ENCODE measurements at regions of chr15 and their contacts with region 1.

Region 1: DNA sequence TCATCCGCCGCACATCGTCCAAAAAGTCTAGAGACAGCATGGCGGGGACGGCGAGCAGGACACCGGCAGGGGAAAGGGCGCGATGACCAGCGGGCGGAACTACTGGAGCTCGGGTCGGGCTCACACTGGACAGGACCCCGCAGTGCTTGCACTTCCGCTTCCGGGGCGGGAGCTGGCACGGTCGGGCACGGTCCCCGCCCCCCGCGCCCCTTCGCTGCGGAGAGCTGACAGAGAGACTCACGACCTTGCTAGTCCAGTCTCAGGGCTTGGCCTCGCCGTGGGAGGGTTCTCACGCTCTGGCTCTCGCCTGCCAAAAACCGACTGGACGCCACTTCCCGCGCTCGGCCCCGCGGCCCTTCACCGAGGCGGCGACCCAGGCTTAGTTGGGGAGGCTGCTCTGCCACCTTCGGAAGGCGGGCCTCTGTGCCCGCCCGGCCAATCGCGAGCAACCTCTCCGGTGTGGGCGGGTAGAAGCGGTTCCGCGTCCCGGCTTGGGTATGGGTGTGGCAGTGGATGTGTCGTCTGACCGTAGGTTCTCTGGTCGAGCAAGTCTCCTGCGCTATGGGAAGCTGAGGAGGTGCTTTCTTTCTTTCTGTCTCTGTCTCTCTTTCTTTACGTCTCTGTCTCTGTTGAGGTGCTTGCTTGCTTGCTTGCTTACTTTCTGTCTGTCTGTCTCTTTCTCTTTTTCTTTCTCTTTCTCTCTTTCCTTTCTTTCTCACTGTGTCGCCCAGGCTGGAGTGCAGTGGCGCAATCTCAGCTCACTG is at the start of gene SEC11A:
- DNase-seq: peak; percentile 93
- ATAC-seq: peak; percentile 93
- H3K4me3 Mint-ChIP-seq: peak within 1 kb of the TSS; percentile 83
- H3K27ac Mint-ChIP-seq: peak within 1 kb of the TSS; percentile 88
- H3K4me1 Mint-ChIP-seq: peaks cover 48% of the 10 kb centered on the region
- H3K27me3 Mint-ChIP-seq: no peaks in the 10 kb centered on the region
- CTCF ChIP-seq: no peak
- total RNA-seq, gene SEC11A: 82.3 to 87.8 TPM

Region 2: GRCh38 chr15:84734794-84735479 is 18.7 kb after region 1 on chr15:
- CTCF ChIA-PET with region 1: interaction called, 11 read pairs
- POLR2A ChIA-PET with region 1: interaction called, 28 read pairs
- intact Hi-C with region 1: no loop called
- DNase-seq: peak; percentile 88
- ATAC-seq: peak; percentile 79
- H3K4me3 Mint-ChIP-seq: peak overlapping the region; percentile 61
- H3K27ac Mint-ChIP-seq: peak overlapping the region; percentile 93
- H3K4me1 Mint-ChIP-seq: peaks cover 55% of the 10 kb centered on the region
- H3K27me3 Mint-ChIP-seq: no peaks in the 10 kb centered on the region
- CTCF ChIP-seq: no peak

Region 3: DNA sequence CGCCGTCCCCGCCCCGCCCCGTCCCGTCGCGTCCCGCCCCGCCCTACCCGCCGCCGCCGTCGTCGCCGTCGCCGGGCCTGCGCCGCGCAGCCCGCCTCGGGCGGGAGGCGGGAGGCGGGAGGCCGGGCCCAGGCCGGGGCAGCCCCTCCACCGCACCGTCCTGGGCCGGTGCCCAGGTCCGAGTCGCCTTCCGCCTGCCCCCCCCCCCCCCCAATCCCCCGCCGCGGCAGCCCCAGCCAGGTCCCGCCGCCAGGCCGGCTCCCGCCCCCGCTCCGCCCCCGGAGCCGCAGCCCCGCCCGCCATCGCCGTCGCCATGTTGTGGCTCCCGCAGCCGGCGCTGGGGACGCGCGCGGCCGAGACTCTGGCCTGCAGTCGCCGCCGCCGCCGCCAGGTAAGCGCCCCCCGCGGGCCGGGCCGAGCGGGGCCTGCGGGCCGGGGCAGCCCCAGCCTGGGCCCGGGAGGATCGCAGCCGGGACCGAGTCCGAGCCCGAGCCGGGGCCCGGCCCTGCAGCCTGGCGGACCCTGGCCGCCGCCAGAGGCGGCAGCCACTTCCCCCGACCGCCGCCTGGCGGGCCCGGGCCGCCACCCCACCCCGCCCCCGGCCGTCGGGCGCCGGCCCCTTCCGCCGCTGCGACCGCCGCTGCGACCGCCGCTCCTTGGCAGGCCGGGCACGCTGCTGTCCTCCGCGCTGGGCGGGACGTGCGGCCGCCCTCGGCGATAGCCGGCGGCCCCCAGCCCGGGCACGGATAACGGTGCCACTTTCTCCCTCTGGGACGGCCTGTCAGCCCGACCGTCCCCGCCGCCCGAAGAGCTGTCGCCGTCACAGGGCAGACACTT is 32.3 kb after region 1 on chr15 and contains the start of gene ZNF592:
- CTCF ChIA-PET with region 1: interaction called, 10 read pairs
- POLR2A ChIA-PET with region 1: interaction called, 13 read pairs
- intact Hi-C with region 1: no loop called
- DNase-seq: peak; percentile 73
- ATAC-seq: peak; percentile 47
- H3K4me3 Mint-ChIP-seq: peak within 1 kb of the TSS; percentile 95
- H3K27ac Mint-ChIP-seq: peak within 1 kb of the TSS; percentile 97
- H3K4me1 Mint-ChIP-seq: peaks cover 54% of the 10 kb centered on the region
- H3K27me3 Mint-ChIP-seq: no peaks in the 10 kb centered on the region
- CTCF ChIP-seq: no peak
- total RNA-seq, gene ZNF592: 18.1 to 18.3 TPM

Region 4: DNA sequence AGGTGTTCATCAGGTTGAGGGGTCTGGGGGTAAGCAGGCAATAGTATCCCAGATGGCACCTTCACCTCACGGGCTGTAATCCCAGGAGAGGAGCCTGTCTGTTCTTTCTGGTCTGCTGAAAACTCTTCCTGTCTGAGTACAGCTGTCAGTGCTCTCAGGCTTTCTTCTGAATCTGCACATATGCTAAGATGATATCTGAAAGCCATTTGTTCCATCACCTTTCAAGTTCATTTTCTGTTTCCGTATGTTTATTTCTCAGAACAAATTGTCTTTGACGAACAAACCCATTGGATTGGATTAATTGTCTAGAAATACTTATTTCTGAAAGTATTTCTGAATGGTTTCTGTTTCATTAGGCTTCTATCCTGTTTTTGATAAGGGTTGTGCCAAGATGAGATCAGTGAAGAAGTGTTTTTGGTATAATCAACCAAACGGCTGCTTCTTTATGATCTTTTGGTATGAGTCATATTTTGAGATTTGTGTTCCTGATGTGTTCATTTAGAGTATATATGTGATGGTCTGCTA is 45.5 kb after region 1 on chr15:
- CTCF ChIA-PET with region 1: no interaction called
- POLR2A ChIA-PET with region 1: interaction called, 4 read pairs
- intact Hi-C with region 1: loop called (anchors 5 kb)
- DNase-seq: no peak
- ATAC-seq: peak; percentile 82
- H3K4me3 Mint-ChIP-seq: no peak overlapping the region
- H3K27ac Mint-ChIP-seq: no peak overlapping the region
- H3K4me1 Mint-ChIP-seq: peaks cover 10% of the 10 kb centered on the region
- H3K27me3 Mint-ChIP-seq: no peaks in the 10 kb centered on the region
- CTCF ChIP-seq: no peak